ENCODE measurements at regions of chr4 and their contacts with region 1.

Region 1: GRCh38 chr4:174714393-174715211 is 114.4 kb downstream of the GLRA3 start:
- DNase-seq: peak in 3 of 6 donors; percentile 4 to 27 (median 15)
- ATAC-seq: peak in 3 of 4 donors; percentile 79 to 85 (median 79)
- H3K4me3 ChIP-seq: no peak overlapping the region
- H3K27ac ChIP-seq: no peak overlapping the region
- H3K4me1 ChIP-seq: no peaks in the 10 kb centered on the region
- H3K27me3 ChIP-seq: no peaks in the 10 kb centered on the region
- CTCF ChIP-seq: peak; percentile 30 to 47 (median 40)

Region 2: GRCh38 chr4:174365018-174365587 is 349.5 kb before region 1 on chr4:
- intact Hi-C with region 1: loop called in 2 of 3 experiments (anchors 10 kb)
- DNase-seq: peak in 1 of 6 donors; percentile 5
- ATAC-seq: peak in 3 of 4 donors; percentile 55 to 61 (median 57)
- H3K4me3 ChIP-seq: no peak overlapping the region
- H3K27ac ChIP-seq: no peak overlapping the region
- H3K4me1 ChIP-seq: no peaks in the 10 kb centered on the region
- H3K27me3 ChIP-seq: no peaks in the 10 kb centered on the region
- CTCF ChIP-seq: peak in 2 of 4 donors; percentile 32 to 41

Region 3: GRCh38 chr4:174377613-174378012 is 337.0 kb before region 1 on chr4:
- intact Hi-C with region 1: loop called in 1 of 3 experiments (anchors 10 kb)
- DNase-seq: no peak
- ATAC-seq: no peak
- H3K4me3 ChIP-seq: no peak overlapping the region
- H3K27ac ChIP-seq: no peak overlapping the region
- H3K4me1 ChIP-seq: no peaks in the 10 kb centered on the region
- H3K27me3 ChIP-seq: no peaks in the 10 kb centered on the region
- CTCF ChIP-seq: no peak